Ovary (tissue), 10 donors: ENCODE measurements at regions of chr15 and their contacts with region 1.

Region 1: GRCh38 chr15:80461356-80462095 is 57.3 kb downstream of the ARNT2 start:
- DNase-seq: no peak
- H3K4me3 ChIP-seq: no peak overlapping the region
- H3K27ac ChIP-seq: no peak overlapping the region
- H3K4me1 ChIP-seq: peaks cover 21% of the 10 kb centered on the region
- H3K27me3 ChIP-seq: no peaks in the 10 kb centered on the region
- CTCF ChIP-seq: no peak
- EP300 ChIP-seq: no peak
- POLR2A ChIP-seq: no peak

Region 2: GRCh38 chr15:78618490-78618934 is 1843.0 kb before region 1 on chr15:
- intact Hi-C with region 1: no loop called
- DNase-seq: peak; percentile 81 to 89 (median 83)
- H3K4me3 ChIP-seq: no peak overlapping the region
- H3K27ac ChIP-seq: no peak overlapping the region
- H3K4me1 ChIP-seq: peaks cover 2% of the 10 kb centered on the region
- H3K27me3 ChIP-seq: no peaks in the 10 kb centered on the region
- CTCF ChIP-seq: peak; percentile 54 to 88 (median 86)
- EP300 ChIP-seq: no peak
- POLR2A ChIP-seq: no peak

Region 3: GRCh38 chr15:80404057-80404715 is 57.3 kb before region 1 on chr15 and contains the start of gene ARNT2:
- intact Hi-C with region 1: no loop called
- DNase-seq: peak; percentile 27 to 64 (median 54)
- H3K4me3 ChIP-seq: peak within 1 kb of the TSS; percentile 43
- H3K27ac ChIP-seq: peak within 1 kb of the TSS; percentile 39 to 53
- H3K4me1 ChIP-seq: peaks cover 7% of the 10 kb centered on the region
- H3K27me3 ChIP-seq: no peaks in the 10 kb centered on the region
- CTCF ChIP-seq: no peak
- EP300 ChIP-seq: no peak
- POLR2A ChIP-seq: no peak
- total RNA-seq, gene ARNT2: 12.0 to 20.5 (median 18.4) TPM

Region 4: GRCh38 chr15:80512726-80513660 is 51.5 kb after region 1 on chr15:
- intact Hi-C with region 1: loop called in 1 of 4 experiments (anchors 5 kb)
- DNase-seq: no peak
- H3K4me3 ChIP-seq: no peak overlapping the region
- H3K27ac ChIP-seq: no peak overlapping the region
- H3K4me1 ChIP-seq: peaks cover 3% of the 10 kb centered on the region
- H3K27me3 ChIP-seq: no peaks in the 10 kb centered on the region
- CTCF ChIP-seq: peak in 1 of 3 donors; percentile 6
- EP300 ChIP-seq: no peak
- POLR2A ChIP-seq: no peak

Region 5: GRCh38 chr15:80567721-80568157 is 106.2 kb after region 1 on chr15:
- intact Hi-C with region 1: loop called in 3 of 4 experiments (anchors 5 to 10 kb)
- DNase-seq: peak in 4 of 5 donors; percentile 45 to 65 (median 50)
- H3K4me3 ChIP-seq: no peak overlapping the region
- H3K27ac ChIP-seq: no peak overlapping the region
- H3K4me1 ChIP-seq: no peaks in the 10 kb centered on the region
- H3K27me3 ChIP-seq: no peaks in the 10 kb centered on the region
- CTCF ChIP-seq: peak; percentile 50 to 66 (median 56)
- EP300 ChIP-seq: no peak
- POLR2A ChIP-seq: no peak

Region 6: DNA sequence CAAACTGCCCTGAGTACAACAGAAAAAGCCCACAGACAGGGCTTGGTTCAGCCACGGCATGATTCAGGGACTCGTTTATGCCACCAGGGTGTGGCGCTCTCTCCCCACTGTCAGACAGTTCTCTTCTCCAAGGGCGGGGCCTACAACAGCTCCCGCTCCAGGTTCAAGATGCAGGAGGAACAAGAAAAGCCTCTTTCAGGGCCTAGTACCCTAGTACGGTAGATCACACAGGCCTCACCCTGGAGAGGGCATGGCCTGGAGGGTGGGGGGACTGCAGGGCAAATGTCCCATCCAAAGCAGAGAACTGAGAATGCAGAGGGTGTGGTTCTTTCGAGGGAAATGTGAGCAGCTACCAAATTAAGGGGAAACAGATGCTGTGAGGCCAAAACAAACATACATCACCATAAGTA is 516.1 kb after region 1 on chr15:
- intact Hi-C with region 1: loop called in 2 of 4 experiments (anchors 5 to 10 kb)
- DNase-seq: peak in 2 of 5 donors; percentile 36 to 54
- H3K4me3 ChIP-seq: no peak overlapping the region
- H3K27ac ChIP-seq: no peak overlapping the region
- H3K4me1 ChIP-seq: peaks cover 2% of the 10 kb centered on the region
- H3K27me3 ChIP-seq: no peaks in the 10 kb centered on the region
- CTCF ChIP-seq: peak in 1 of 3 donors; percentile 27
- EP300 ChIP-seq: no peak
- POLR2A ChIP-seq: no peak